Activated CD8-positive, alpha-beta memory T cell treated with anti-CD3 and anti-CD28 coated beads, Interleukin-2, amount 10 ng/mL, durations not matched to agents 7 days and 5 days (primary cell): ENCODE measurements at regions of chr1 and their contacts with region 1.

Region 1: GRCh38 chr1:40840526-40841323 is 21.4 kb downstream of the CITED4 start:
- DNase-seq: peak; percentile 83
- ATAC-seq: peak; percentile 76
- H3K4me3 Mint-ChIP-seq: peak overlapping the region; percentile 5
- H3K27ac Mint-ChIP-seq: peak overlapping the region; percentile 85
- H3K4me1 Mint-ChIP-seq: peaks cover 34% of the 10 kb centered on the region
- H3K27me3 Mint-ChIP-seq: no peaks in the 10 kb centered on the region

Region 2: GRCh38 chr1:40825435-40825788 is 15.3 kb before region 1 on chr1:
- CTCF ChIA-PET with region 1: interaction called, 10 read pairs
- DNase-seq: no peak
- ATAC-seq: peak; percentile 52
- H3K4me3 Mint-ChIP-seq: no peak overlapping the region
- H3K27ac Mint-ChIP-seq: peak overlapping the region; percentile 16
- H3K4me1 Mint-ChIP-seq: peaks cover 19% of the 10 kb centered on the region
- H3K27me3 Mint-ChIP-seq: no peaks in the 10 kb centered on the region